Panc1 (cell line): ENCODE measurements at regions of chr1 and their contacts with region 1.

Region 1: GRCh38 chr1:194447636-194448035 is 1261.2 kb upstream of the B3GALT2 start:
- DNase-seq: no peak
- ATAC-seq: no peak
- H3K4me3 ChIP-seq: no peak overlapping the region
- H3K27ac ChIP-seq: no peak overlapping the region
- H3K4me1 ChIP-seq: no peaks in the 10 kb centered on the region
- H3K27me3 ChIP-seq: no peaks in the 10 kb centered on the region
- CTCF ChIP-seq: no peak

Region 2: GRCh38 chr1:193443886-193444285 is 1003.8 kb before region 1 on chr1:
- CTCF ChIA-PET with region 1: no interaction called
- POLR2A ChIA-PET with region 1: interaction called, 13 read pairs
- in situ Hi-C with region 1: no loop called
- intact Hi-C with region 1: no loop called
- DNase-seq: no peak
- ATAC-seq: no peak
- H3K4me3 ChIP-seq: no peak overlapping the region
- H3K27ac ChIP-seq: no peak overlapping the region
- H3K4me1 ChIP-seq: no peaks in the 10 kb centered on the region
- H3K27me3 ChIP-seq: no peaks in the 10 kb centered on the region
- CTCF ChIP-seq: no peak

Region 3: DNA sequence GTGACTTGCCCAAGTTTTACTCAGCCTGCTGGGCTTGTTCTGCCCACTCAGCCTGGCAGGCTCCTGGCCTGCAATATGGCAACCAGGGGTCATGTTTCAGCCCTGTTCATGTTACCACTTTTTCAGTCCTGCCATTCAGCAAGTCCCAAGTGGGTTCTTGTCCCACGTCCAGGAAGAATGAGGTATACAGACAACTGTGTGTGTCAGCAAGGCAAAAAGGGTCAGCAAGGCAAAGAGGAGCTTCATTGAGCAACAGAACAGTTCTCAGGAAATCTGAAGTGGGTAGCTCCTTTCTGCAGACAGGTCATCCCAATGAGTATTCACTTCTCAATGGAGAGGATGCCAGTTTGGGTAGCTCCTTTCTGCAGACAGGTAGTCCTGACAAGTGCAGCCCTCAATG is 27.9 kb before region 1 on chr1:
- CTCF ChIA-PET with region 1: no interaction called
- POLR2A ChIA-PET with region 1: no interaction called
- in situ Hi-C with region 1: no loop called
- intact Hi-C with region 1: no loop called
- DNase-seq: no peak
- ATAC-seq: no peak
- H3K4me3 ChIP-seq: no peak overlapping the region
- H3K27ac ChIP-seq: no peak overlapping the region
- H3K4me1 ChIP-seq: no peaks in the 10 kb centered on the region
- H3K27me3 ChIP-seq: no peaks in the 10 kb centered on the region
- CTCF ChIP-seq: no peak